ENCODE measurements at regions of chr11 and their contacts with region 1.

Region 1: GRCh38 chr11:12100841-12101242 is 9.5 kb upstream of the MICAL2 start:
- DNase-seq: no peak
- H3K4me3 ChIP-seq: no peak overlapping the region
- H3K27ac ChIP-seq: no peak overlapping the region
- H3K4me1 ChIP-seq: peaks cover 0 to 15% of the 10 kb centered on the region in 2 donors
- H3K27me3 ChIP-seq: no peaks in the 10 kb centered on the region
- CTCF ChIP-seq: no peak

Region 2: DNA sequence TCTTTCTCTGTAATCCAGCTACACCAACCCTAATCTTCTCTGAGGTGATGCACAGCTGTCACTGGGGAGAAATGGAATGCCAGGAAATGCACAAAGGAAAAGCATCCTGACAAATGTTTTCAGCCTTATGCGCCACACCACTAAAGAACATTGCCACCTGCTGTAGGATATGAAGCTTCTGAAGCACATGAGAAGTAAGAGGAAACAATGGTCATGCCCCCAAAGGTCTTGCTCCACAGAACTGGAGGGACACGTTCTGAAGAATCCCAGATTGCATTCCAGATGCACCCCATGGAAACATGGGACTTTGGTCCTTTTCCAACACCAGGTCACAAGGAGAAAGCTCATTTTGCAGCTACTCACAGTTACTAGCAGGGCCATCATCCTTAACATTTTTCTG is 1194.3 kb before region 1 on chr11:
- intact Hi-C with region 1: no loop called
- DNase-seq: no peak
- H3K4me3 ChIP-seq: no peak overlapping the region
- H3K27ac ChIP-seq: no peak overlapping the region
- H3K4me1 ChIP-seq: peaks cover 0 to under 1% of the 10 kb centered on the region in 2 donors
- H3K27me3 ChIP-seq: no peaks in the 10 kb centered on the region
- CTCF ChIP-seq: peak in 1 of 3 experiments; percentile 20

Region 3: DNA sequence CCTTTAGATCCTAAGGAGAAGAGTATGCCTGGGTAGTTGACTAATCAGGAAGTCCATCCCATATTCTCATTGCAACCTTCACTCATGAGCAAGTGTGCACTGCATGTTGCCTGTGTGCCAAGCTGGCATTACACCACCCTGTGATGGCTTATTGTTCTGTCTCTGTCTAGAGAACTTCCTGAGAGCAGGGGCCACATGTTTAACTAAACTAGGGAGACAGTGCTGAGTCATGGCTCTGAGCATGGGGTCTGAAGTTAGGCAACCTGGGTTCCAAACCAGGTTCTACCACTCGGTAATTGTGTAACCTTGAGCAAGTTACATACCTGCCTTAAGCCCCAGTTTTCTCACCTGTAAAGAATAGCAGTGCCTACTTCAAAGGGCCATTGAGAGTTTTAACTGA is 787.4 kb before region 1 on chr11:
- intact Hi-C with region 1: loop called (anchors 10 kb)
- DNase-seq: peak; percentile 16 to 70
- H3K4me3 ChIP-seq: no peak overlapping the region
- H3K27ac ChIP-seq: peak overlapping the region; percentile 28 to 78
- H3K4me1 ChIP-seq: peaks cover 9 to 19% of the 10 kb centered on the region in 2 donors
- H3K27me3 ChIP-seq: no peaks in the 10 kb centered on the region
- CTCF ChIP-seq: no peak

Region 4: GRCh38 chr11:11937957-11938356 is 162.9 kb before region 1 on chr11:
- intact Hi-C with region 1: no loop called
- DNase-seq: no peak
- H3K4me3 ChIP-seq: no peak overlapping the region
- H3K27ac ChIP-seq: no peak overlapping the region
- H3K4me1 ChIP-seq: no peaks in the 10 kb centered on the region
- H3K27me3 ChIP-seq: no peaks in the 10 kb centered on the region
- CTCF ChIP-seq: no peak

Measured in ascending aorta (tissue), 2 donors.